ENCODE measurements at regions of chr6 and their contacts with region 1.

Region 1: DNA sequence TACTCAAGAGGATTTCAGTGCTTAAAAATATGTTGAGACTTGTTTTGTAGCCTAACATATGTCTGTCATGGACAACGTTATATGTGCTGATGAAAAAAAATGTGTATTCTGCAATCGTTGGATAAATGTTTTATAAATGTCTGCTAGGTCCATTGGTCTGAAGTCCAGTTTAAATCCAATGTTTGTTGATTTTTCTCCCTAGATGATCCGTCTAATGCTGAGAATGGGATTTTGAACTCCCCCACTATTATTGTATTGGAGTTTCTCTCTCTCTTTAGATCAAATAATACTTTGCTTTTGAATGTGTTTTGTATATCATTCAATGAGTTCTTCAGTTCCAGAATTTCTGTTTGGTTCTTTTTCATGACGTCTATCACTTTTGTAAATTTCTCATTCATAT is 44.9 kb downstream of the CYB5R4 start:
- DNase-seq: no peak
- H3K4me3 ChIP-seq: no peak overlapping the region
- H3K27ac ChIP-seq: no peak overlapping the region
- H3K4me1 ChIP-seq: no peaks in the 10 kb centered on the region
- CTCF ChIP-seq: no peak

Region 2: GRCh38 chr6:83490217-83490807 is 414.1 kb before region 1 on chr6:
- CTCF ChIA-PET with region 1: no interaction called
- POLR2A ChIA-PET with region 1: no interaction called
- intact Hi-C with region 1: loop called (anchors 5 kb)
- DNase-seq: no peak
- H3K4me3 ChIP-seq: no peak overlapping the region
- H3K27ac ChIP-seq: no peak overlapping the region
- H3K4me1 ChIP-seq: no peaks in the 10 kb centered on the region
- CTCF ChIP-seq: no peak

Measured in OCI-LY7 (cell line).